Mammary epithelial cell (primary cell): ENCODE measurements at regions of chrX and their contacts with region 1.

Region 1: GRCh38 chrX:151621422-151621821 is 57.9 kb downstream of the PASD1 start:
- DNase-seq: no peak
- H3K4me3 ChIP-seq: no peak overlapping the region
- H3K27ac ChIP-seq: no peak overlapping the region
- H3K4me1 ChIP-seq: no peaks in the 10 kb centered on the region
- H3K27me3 ChIP-seq: no peaks in the 10 kb centered on the region
- CTCF ChIP-seq: no peak

Region 2: DNA sequence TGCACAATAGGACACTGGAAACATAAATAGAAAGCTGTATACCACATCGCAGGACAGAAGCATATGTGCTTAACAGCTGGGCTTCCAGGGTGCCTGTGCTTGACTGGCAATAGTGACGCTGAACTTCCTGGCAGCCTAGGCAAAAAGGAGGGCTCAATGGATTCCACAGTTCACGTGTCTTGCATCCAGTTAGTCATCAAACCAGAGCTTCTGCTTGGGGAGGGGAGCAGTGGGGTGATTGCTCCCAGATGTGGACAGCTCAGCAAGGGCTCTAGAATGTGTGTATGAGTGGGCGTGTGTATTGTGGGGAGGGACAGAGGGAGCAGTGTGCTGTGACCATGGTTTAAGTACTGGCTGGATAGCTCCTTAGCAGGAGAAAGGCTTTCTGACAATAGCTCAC is 76.1 kb after region 1 on chrX:
- CTCF ChIA-PET with region 1: no interaction called
- dilution Hi-C with region 1: loop called (anchors 5 kb)
- in situ Hi-C with region 1: no loop called
- intact Hi-C with region 1: no loop called
- DNase-seq: no peak
- H3K4me3 ChIP-seq: no peak overlapping the region
- H3K27ac ChIP-seq: no peak overlapping the region
- H3K4me1 ChIP-seq: no peaks in the 10 kb centered on the region
- H3K27me3 ChIP-seq: no peaks in the 10 kb centered on the region
- CTCF ChIP-seq: no peak